Right ventricle myocardium superior (tissue), 1 donor: ENCODE measurements at regions of chr10 and their contacts with region 1.

Region 1: DNA sequence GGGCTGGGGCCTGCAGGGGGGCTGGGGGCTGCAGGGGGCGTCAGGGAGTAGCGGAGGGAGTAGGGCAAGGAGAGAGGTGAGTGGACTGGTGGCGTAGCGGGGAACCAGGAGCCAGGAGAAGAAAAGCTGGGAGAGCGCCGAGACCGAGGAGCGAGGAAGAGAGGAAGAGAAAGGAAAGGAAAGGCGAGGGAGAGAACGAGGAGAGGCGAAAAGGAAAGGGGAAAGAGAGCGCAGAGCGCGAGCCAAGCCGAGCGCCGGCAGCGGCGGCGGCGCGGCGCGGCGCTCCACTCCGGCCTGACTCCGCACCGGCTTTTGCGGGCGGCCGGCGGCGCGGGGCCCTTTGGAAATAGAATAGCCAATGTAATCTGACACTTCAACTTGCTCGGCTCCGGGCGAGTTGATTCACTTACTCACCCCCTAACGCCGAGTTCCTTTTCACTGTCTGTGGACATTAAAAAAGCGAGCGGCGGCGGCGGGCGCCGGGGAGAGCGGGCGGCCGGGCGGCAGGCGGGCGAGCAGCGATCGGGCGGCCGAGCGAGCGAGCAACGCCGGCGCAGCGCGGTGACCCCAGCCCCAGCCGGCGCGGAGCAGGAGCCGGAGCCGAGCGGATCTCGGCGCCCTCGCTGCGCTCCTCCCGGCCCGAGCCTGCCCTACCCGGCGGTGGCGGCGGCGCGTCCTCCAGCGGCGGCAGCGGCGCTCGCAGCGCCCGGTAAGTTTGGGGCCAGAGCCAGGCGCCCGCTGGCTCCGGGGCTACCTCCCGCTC is at the start of gene ZMIZ1:
- DNase-seq: peak; percentile 93
- ATAC-seq: peak; percentile 45
- total RNA-seq, gene ZMIZ1: 44.8 TPM

Region 2: GRCh38 chr10:78302989-78303854 is 765.5 kb before region 1 on chr10:
- intact Hi-C with region 1: loop called (anchors 5 kb)
- DNase-seq: peak; percentile 96
- ATAC-seq: peak; percentile 96

Region 3: DNA sequence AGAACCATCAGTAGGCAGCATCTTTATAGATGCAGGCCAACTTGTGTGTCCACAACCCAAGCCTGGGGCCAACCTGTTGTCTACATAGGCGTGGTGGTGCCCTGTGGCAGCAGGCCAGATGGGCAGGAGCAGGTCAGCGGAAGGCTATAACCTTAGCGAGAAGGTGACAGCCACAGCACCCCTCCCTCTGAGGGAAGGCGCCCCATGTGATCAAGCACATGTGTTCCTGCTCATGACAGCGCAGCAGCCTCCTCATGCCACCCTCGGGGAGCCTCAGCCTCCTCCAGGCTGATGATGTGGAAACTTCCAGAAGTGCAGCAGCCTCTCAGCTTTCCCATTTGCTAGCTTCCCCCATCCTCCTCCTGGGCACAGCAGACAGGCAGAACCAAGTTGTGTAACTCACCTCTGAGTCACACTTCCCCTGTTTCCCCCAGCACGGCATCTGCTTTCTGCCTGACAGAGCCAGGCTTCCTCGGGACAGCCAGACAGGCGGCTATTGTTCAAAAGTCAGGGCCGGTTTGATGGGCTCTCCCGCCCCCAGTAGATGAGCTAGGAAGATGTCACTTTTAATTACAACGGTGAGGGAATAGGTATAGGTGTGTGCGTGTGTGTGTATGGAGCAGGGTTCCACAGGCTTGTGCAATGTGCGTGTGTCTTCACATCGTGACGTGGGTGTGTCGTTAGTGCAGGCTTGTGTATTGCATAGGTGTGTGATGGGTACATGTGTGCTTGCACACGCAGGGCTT is 312.0 kb before region 1 on chr10:
- intact Hi-C with region 1: no loop called
- DNase-seq: peak; percentile 84
- ATAC-seq: peak; percentile 95

Region 4: GRCh38 chr10:78972947-78973900 is 95.5 kb before region 1 on chr10:
- intact Hi-C with region 1: loop called (anchors 5 kb)
- DNase-seq: peak; percentile 85
- ATAC-seq: peak; percentile 77

Region 5: GRCh38 chr10:79149662-79150443 is 81.1 kb after region 1 on chr10:
- intact Hi-C with region 1: loop called (anchors 5 kb)
- DNase-seq: peak; percentile 93
- ATAC-seq: peak; percentile 47

Region 6: DNA sequence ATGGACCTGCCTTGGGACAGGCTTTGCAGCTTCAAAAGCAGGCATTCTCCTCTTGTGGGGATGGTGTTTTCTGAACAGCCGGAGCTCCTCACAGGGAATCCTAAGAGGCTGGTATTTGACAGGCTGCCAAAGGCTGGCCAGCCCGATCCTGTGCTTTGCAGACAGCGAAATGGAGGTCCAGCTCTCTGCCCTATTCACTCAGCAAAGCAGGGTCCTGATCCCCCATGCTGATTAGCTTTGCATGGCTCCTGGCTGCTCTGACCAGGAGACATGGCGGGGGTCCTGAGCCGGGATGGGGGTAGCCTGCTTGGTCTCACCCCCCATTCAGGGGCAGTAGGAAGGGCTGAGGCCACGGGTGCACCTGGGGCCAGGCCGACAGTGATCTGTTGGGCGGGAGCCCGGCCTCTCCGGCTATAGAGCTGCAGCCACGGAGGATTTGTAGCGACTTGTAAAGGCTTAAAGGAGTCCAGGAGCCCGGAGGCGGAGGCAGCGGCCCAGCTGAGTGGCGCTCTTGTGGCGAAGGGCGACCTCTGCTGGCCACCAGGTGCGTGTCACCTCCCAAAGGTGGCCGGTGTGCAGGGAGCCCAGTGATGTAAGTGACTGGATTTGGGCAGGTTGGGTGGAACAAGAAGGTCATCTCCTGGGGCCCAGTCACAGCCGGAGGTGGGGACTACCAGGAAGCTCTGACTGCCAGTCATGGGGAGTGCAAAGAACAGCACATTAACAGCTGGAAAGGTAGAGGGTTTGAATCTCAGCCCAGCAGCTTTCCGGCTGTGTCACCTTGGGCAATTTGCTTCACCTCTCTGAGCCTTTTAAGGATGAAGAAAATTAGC is 126.6 kb after region 1 on chr10:
- intact Hi-C with region 1: loop called (anchors 5 kb)
- DNase-seq: peak; percentile 94
- ATAC-seq: peak; percentile 90